CD4-positive, alpha-beta T cell (primary cell): ENCODE measurements at regions of chr15 and their contacts with region 1.

Region 1: GRCh38 chr15:34456658-34457057 is 19.1 kb upstream of the GOLGA8A start:
- DNase-seq: no peak
- ATAC-seq: no peak
- H3K4me3 ChIP-seq: no peak overlapping the region
- H3K4me3 Mint-ChIP-seq: no peak overlapping the region
- H3K27ac ChIP-seq: no peak overlapping the region
- H3K27ac Mint-ChIP-seq: no peak overlapping the region
- H3K4me1 ChIP-seq: no peaks in the 10 kb centered on the region
- H3K4me1 Mint-ChIP-seq: no peaks in the 10 kb centered on the region
- H3K27me3 ChIP-seq: peaks cover 0 to 3% of the 10 kb centered on the region in 2 experiments
- H3K27me3 Mint-ChIP-seq: peaks cover 59% of the 10 kb centered on the region
- CTCF ChIP-seq: no peak

Region 2: DNA sequence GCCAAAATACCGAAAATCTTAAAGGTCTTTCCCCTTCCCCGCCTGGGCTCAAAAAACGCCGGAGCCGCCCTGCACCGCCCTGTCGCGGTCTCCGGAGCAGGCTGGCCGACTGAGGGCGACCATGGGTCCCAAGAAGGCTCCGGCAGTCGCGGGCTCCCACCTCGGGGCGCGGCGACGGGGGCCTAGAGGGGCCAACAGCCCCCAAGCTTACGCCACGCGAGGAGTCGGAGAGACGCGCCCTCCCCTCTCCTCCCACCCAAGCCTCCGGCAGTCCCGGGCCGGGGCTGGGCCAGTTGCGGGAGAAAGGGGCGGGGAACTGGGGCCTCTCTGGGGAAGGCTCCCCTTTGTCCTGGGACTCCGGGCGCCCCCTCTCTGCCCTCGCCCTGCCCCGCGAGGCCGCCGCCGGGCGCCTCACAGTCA is 57.6 kb after region 1 on chr15:
- CTCF ChIA-PET with region 1: no interaction called
- POLR2A ChIA-PET with region 1: no interaction called
- intact Hi-C with region 1: loop called in 1 of 2 experiments (anchors 10 kb)
- DNase-seq: peak in 3 of 14 experiments; percentile 4 to 36 (median 13)
- ATAC-seq: peak; percentile 51
- H3K4me3 ChIP-seq: peak overlapping the region; percentile 46
- H3K4me3 Mint-ChIP-seq: peak overlapping the region; percentile 68
- H3K27ac ChIP-seq: no peak overlapping the region
- H3K27ac Mint-ChIP-seq: no peak overlapping the region
- H3K4me1 ChIP-seq: peaks cover 23% of the 10 kb centered on the region
- H3K4me1 Mint-ChIP-seq: peaks cover 20% of the 10 kb centered on the region
- H3K27me3 ChIP-seq: peaks cover 8 to 56% of the 10 kb centered on the region in 2 experiments
- H3K27me3 Mint-ChIP-seq: peaks cover 78% of the 10 kb centered on the region
- CTCF ChIP-seq: no peak